CD8-positive, alpha-beta T cell (primary cell): ENCODE measurements at regions of chr7 and their contacts with region 1.

Region 1: DNA sequence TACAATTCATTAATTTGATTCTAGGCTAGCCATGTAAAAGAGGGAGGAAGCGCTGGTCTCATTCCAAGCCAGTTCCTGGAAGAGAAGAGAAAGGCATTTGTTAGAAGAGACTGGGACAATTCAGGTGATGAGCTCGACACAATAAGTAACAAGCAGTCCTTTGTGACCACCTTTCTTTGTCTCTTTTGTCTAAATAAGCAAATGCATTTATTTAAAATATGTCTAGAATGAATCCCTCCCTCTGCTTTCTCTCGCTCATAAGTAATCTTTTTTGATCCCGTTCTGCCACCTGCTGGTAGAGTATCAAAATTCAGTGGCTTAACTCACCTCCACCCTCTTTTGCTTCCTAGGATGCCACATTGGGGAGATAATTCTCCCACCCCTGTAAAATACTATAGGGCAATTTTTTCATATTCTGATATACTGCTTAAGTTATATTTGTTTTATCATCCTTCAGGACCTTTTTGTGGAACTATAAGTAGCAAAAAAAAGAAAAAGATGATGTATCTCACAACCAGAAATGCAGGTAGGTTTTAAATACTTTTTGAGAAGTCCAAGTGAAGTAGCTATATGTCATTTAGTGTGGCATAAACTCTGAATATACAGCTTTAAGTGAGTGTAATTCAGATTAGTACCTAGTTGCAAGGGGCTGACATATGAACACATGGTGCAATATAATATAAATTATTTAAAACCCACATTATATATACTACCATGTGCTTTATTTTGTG is 91.5 kb downstream of the GSDME start:
- DNase-seq: peak in 8 of 9 experiments; percentile 1 to 65 (median 30)
- ATAC-seq: peak; percentile 49
- H3K4me3 ChIP-seq: no peak overlapping the region
- H3K4me3 Mint-ChIP-seq: no peak overlapping the region
- H3K27ac ChIP-seq: no peak overlapping the region
- H3K27ac Mint-ChIP-seq: no peak overlapping the region
- H3K4me1 ChIP-seq: no peaks in the 10 kb centered on the region
- H3K4me1 Mint-ChIP-seq: no peaks in the 10 kb centered on the region
- H3K27me3 ChIP-seq: no peaks in the 10 kb centered on the region
- H3K27me3 Mint-ChIP-seq: no peaks in the 10 kb centered on the region
- CTCF ChIP-seq: peak; percentile 84

Region 2: DNA sequence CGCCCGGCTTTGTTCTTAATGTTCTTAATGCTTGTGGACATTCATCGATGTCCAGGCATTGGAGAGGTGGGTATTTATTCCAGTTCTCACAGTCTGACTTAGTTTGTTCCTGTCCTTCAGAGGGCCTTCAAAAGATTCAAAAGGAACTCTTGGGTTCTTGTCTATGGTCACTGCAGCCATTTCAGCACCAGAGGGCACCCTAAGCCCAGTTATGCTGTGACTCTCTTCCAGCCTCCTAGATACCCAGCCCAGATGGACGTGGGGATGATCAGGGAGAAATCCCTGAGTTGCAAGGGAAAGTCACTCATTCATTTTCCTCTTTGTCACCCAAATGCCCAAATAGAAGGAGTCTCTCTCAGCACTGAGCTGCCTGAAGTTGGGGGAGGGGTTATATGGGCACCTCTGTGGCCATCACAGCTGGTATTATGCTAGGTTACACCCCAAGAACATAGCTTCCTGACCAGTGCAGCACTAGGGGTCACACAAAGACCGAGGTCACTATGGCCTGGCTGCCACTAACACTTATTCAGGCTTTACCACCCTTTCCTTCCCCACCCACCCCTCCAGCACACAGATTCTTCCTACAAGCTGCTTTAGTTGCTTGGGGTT is 1095.0 kb before region 1 on chr7:
- CTCF ChIA-PET with region 1: interaction called, 8 read pairs
- POLR2A ChIA-PET with region 1: no interaction called
- intact Hi-C with region 1: loop called (anchors 1 kb)
- DNase-seq: peak; percentile 40 to 81 (median 66)
- ATAC-seq: peak; percentile 83
- H3K4me3 ChIP-seq: no peak overlapping the region
- H3K4me3 Mint-ChIP-seq: no peak overlapping the region
- H3K27ac ChIP-seq: no peak overlapping the region
- H3K27ac Mint-ChIP-seq: no peak overlapping the region
- H3K4me1 ChIP-seq: no peaks in the 10 kb centered on the region
- H3K4me1 Mint-ChIP-seq: no peaks in the 10 kb centered on the region
- H3K27me3 ChIP-seq: no peaks in the 10 kb centered on the region
- H3K27me3 Mint-ChIP-seq: peaks cover 16% of the 10 kb centered on the region
- CTCF ChIP-seq: peak; percentile 67

Region 3: DNA sequence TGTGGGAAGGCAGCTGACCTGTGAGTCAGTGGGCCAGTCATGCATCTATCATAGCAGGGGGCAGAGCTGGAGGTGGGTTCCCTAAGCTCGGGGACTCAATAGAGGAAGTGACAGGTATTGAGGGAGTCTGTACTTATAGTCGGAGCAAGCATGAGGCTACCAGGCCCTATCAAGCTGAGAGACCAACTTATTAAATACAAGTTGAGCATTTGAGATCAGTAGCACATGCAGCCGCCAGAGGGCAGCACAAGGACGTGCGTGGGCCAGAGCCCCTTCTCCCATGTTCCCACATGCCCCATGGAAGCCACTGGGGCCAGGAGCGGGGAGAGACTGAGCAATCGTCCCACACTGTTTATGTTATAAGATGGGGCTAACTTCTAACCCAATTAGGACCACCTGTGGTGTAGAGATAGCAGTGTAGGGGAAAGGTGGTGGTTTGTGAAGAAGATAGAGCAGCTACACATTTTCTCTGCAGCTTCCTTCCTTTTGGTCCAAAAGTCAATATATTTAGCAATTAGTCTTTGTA is 968.8 kb before region 1 on chr7:
- CTCF ChIA-PET with region 1: interaction called, 7 read pairs
- POLR2A ChIA-PET with region 1: no interaction called
- intact Hi-C with region 1: loop called (anchors 1 to 2 kb)
- DNase-seq: peak in 8 of 9 experiments; percentile 28 to 71 (median 60)
- ATAC-seq: peak; percentile 65
- H3K4me3 ChIP-seq: no peak overlapping the region
- H3K4me3 Mint-ChIP-seq: no peak overlapping the region
- H3K27ac ChIP-seq: no peak overlapping the region
- H3K27ac Mint-ChIP-seq: no peak overlapping the region
- H3K4me1 ChIP-seq: no peaks in the 10 kb centered on the region
- H3K4me1 Mint-ChIP-seq: no peaks in the 10 kb centered on the region
- H3K27me3 ChIP-seq: no peaks in the 10 kb centered on the region
- H3K27me3 Mint-ChIP-seq: no peaks in the 10 kb centered on the region
- CTCF ChIP-seq: peak; percentile 64

Region 4: DNA sequence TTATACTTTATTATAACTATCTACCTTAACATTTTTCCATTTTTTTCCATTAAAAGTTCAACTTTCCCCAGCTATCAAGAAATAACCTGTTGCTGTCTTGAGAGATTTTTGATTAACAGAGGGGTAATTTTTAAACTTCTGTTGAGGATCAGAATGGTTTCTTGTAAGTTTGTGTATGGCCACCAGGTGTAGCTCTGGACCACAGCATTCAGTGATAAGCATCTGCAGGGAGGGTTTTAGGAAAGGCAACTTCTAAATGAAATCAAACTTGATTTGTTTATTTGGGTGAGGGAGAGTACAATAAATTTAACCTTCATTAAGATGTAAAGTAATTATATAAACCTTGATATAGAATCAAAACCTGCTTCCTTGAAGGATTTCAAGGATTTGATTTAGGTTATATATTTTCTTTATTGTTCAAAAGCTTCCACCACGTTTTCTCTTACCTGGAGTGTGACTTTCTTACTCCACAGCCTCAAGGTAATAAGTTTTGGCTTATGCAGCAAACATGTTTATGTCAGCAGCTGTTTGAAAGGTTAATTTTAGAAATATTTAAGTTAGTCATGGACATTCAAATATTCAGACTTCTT is 802.4 kb before region 1 on chr7:
- CTCF ChIA-PET with region 1: interaction called, 5 read pairs
- POLR2A ChIA-PET with region 1: no interaction called
- intact Hi-C with region 1: loop called in 1 of 2 experiments (anchors 1 kb)
- DNase-seq: peak in 2 of 9 experiments; percentile 41 to 51
- ATAC-seq: no peak
- H3K4me3 ChIP-seq: no peak overlapping the region
- H3K4me3 Mint-ChIP-seq: no peak overlapping the region
- H3K27ac ChIP-seq: no peak overlapping the region
- H3K27ac Mint-ChIP-seq: no peak overlapping the region
- H3K4me1 ChIP-seq: no peaks in the 10 kb centered on the region
- H3K4me1 Mint-ChIP-seq: no peaks in the 10 kb centered on the region
- H3K27me3 ChIP-seq: no peaks in the 10 kb centered on the region
- H3K27me3 Mint-ChIP-seq: peaks cover 2% of the 10 kb centered on the region
- CTCF ChIP-seq: peak; percentile 28

Region 5: GRCh38 chr7:24290004-24290641 is 375.6 kb before region 1 on chr7:
- CTCF ChIA-PET with region 1: interaction called, 11 read pairs
- POLR2A ChIA-PET with region 1: no interaction called
- intact Hi-C with region 1: loop called in 1 of 2 experiments (anchors 1 kb)
- DNase-seq: peak in 3 of 9 experiments; percentile 18 to 65 (median 60)
- ATAC-seq: peak; percentile 58
- H3K4me3 ChIP-seq: no peak overlapping the region
- H3K4me3 Mint-ChIP-seq: no peak overlapping the region
- H3K27ac ChIP-seq: no peak overlapping the region
- H3K27ac Mint-ChIP-seq: no peak overlapping the region
- H3K4me1 ChIP-seq: peaks cover 5% of the 10 kb centered on the region
- H3K4me1 Mint-ChIP-seq: peaks cover 8% of the 10 kb centered on the region
- H3K27me3 ChIP-seq: peaks cover 2 to 11% of the 10 kb centered on the region in 2 experiments
- H3K27me3 Mint-ChIP-seq: peaks cover 38% of the 10 kb centered on the region
- CTCF ChIP-seq: no peak

Region 6: GRCh38 chr7:24401628-24402593 is 263.8 kb before region 1 on chr7:
- CTCF ChIA-PET with region 1: no interaction called
- POLR2A ChIA-PET with region 1: no interaction called
- intact Hi-C with region 1: loop called (anchors 1 to 2 kb)
- DNase-seq: peak in 2 of 9 experiments; percentile 30 to 47
- ATAC-seq: peak; percentile 48
- H3K4me3 ChIP-seq: no peak overlapping the region
- H3K4me3 Mint-ChIP-seq: no peak overlapping the region
- H3K27ac ChIP-seq: no peak overlapping the region
- H3K27ac Mint-ChIP-seq: no peak overlapping the region
- H3K4me1 ChIP-seq: no peaks in the 10 kb centered on the region
- H3K4me1 Mint-ChIP-seq: peaks cover 16% of the 10 kb centered on the region
- H3K27me3 ChIP-seq: no peaks in the 10 kb centered on the region
- H3K27me3 Mint-ChIP-seq: peaks cover 2% of the 10 kb centered on the region
- CTCF ChIP-seq: peak; percentile 41

Region 7: DNA sequence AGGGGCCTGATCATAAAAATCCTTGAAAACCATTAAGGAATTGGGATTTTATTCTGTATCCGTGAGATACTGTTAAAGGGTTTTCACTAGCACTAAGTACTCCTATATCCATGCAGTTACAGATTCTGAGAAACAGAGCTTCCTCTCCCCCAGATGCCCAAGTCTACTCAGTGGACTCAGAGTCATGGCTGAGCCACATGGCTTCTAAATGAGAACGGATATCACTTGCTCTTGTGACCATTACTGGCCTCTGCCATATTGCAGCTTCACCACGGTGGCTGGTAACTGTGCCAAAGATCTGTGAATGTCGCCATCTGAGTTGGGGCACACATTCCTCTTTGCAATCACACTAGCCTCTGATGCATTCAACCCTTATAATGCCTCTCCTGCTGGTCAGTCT is 134.5 kb before region 1 on chr7:
- CTCF ChIA-PET with region 1: no interaction called
- POLR2A ChIA-PET with region 1: no interaction called
- intact Hi-C with region 1: no loop called
- DNase-seq: no peak
- ATAC-seq: no peak
- H3K4me3 ChIP-seq: no peak overlapping the region
- H3K4me3 Mint-ChIP-seq: no peak overlapping the region
- H3K27ac ChIP-seq: no peak overlapping the region
- H3K27ac Mint-ChIP-seq: no peak overlapping the region
- H3K4me1 ChIP-seq: no peaks in the 10 kb centered on the region
- H3K4me1 Mint-ChIP-seq: no peaks in the 10 kb centered on the region
- H3K27me3 ChIP-seq: no peaks in the 10 kb centered on the region
- H3K27me3 Mint-ChIP-seq: no peaks in the 10 kb centered on the region
- CTCF ChIP-seq: no peak